CD8-positive, alpha-beta T cell (primary cell): ENCODE measurements at regions of chr3 and their contacts with region 1.

Region 1: DNA sequence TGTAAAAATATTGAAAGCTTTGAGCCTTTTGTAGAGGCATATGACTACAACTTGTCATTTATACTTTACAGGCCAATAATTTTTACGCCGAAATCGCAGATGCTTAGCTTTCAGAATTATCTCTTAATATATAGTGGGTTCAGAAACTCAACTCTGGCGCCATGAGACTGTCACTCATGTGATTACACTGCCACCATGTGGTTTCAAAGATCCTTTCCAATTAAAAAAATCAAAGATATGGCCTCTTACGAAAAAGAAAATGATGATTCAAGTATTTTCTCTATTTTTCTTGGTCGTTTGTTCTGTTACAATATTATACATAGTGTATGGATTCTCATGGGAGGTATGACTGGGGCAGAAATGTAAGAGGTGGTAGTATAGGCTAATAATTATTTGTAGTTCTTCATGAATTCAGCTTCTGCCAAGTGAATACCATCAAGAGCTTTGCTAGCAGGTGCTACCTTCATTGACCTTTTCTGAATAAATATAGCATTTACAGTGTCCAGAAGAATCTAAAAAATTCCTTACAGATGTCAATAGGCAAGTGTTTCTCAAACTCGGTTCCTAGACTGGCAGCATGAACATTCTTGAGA is 751.7 kb upstream of the GOLIM4 start:
- DNase-seq: peak in 1 of 9 experiments; percentile 14
- ATAC-seq: no peak
- H3K4me3 ChIP-seq: no peak overlapping the region
- H3K4me3 Mint-ChIP-seq: no peak overlapping the region
- H3K27ac ChIP-seq: no peak overlapping the region
- H3K27ac Mint-ChIP-seq: no peak overlapping the region
- H3K4me1 ChIP-seq: no peaks in the 10 kb centered on the region
- H3K4me1 Mint-ChIP-seq: no peaks in the 10 kb centered on the region
- H3K27me3 ChIP-seq: no peaks in the 10 kb centered on the region
- H3K27me3 Mint-ChIP-seq: no peaks in the 10 kb centered on the region
- CTCF ChIP-seq: no peak

Region 2: DNA sequence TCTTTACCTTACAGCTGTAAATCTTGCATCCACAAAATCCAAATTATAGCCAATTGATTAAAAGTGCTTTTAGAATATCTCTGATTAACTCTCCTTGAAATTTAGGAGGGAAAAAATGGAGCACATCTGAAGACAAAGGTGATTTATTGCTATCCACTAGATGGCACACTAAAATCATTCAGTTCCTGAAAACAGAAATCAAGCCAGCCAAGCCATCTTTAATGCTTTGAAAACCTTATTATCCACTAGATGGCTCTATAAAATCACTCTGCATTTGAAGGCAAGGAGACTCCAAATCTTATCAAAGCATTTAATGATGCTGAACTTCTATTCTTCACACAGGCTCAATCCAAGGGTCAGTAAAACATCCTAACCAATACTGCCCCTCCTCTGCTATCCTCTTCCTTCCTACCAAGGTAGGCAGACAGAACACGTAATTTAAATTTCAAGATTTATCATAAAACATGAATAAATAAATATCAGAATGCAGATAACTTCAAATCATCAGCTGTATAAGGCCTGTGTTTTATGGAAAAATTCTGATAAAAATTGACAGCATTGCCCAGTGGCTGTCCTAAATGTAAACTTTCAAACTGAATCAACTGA is 800.1 kb before region 1 on chr3:
- CTCF ChIA-PET with region 1: no interaction called
- POLR2A ChIA-PET with region 1: no interaction called
- intact Hi-C with region 1: loop called in 1 of 2 experiments (anchors 5 kb)
- DNase-seq: peak in 2 of 9 experiments; percentile 42 to 69
- ATAC-seq: peak; percentile 51
- H3K4me3 ChIP-seq: no peak overlapping the region
- H3K4me3 Mint-ChIP-seq: no peak overlapping the region
- H3K27ac ChIP-seq: no peak overlapping the region
- H3K27ac Mint-ChIP-seq: no peak overlapping the region
- H3K4me1 ChIP-seq: no peaks in the 10 kb centered on the region
- H3K4me1 Mint-ChIP-seq: no peaks in the 10 kb centered on the region
- H3K27me3 ChIP-seq: no peaks in the 10 kb centered on the region
- H3K27me3 Mint-ChIP-seq: no peaks in the 10 kb centered on the region
- CTCF ChIP-seq: peak; percentile 46

Region 3: DNA sequence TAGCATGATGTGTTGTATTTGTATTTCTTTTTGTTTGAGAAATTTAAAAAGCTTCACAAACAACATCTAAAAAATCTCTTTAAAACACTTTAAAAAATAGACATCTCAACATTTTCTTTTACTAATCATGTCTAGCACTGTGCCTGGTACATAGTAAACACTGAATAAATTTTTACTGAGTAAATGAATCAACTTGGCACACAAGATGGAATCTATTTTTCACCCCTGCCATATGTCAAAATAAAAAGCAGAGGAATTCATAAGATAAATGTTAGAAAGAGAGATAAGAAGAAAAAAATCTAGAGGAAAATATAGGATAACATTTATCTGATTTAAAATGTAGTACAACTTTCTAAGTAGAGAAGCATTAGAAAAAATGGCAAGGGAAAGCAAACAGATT is 743.0 kb before region 1 on chr3:
- CTCF ChIA-PET with region 1: no interaction called
- POLR2A ChIA-PET with region 1: no interaction called
- intact Hi-C with region 1: no loop called
- DNase-seq: no peak
- ATAC-seq: no peak
- H3K4me3 ChIP-seq: no peak overlapping the region
- H3K4me3 Mint-ChIP-seq: no peak overlapping the region
- H3K27ac ChIP-seq: no peak overlapping the region
- H3K27ac Mint-ChIP-seq: no peak overlapping the region
- H3K4me1 ChIP-seq: no peaks in the 10 kb centered on the region
- H3K4me1 Mint-ChIP-seq: no peaks in the 10 kb centered on the region
- H3K27me3 ChIP-seq: no peaks in the 10 kb centered on the region
- H3K27me3 Mint-ChIP-seq: peaks cover 6% of the 10 kb centered on the region
- CTCF ChIP-seq: no peak

Region 4: GRCh38 chr3:168213920-168214319 is 633.5 kb before region 1 on chr3:
- CTCF ChIA-PET with region 1: no interaction called
- POLR2A ChIA-PET with region 1: no interaction called
- intact Hi-C with region 1: loop called in 1 of 2 experiments (anchors 10 kb)
- DNase-seq: peak in 2 of 9 experiments; percentile 1 to 18
- ATAC-seq: peak; percentile 23
- H3K4me3 ChIP-seq: peak overlapping the region in 1 of 2 experiments; percentile 9
- H3K4me3 Mint-ChIP-seq: peak overlapping the region; percentile 36
- H3K27ac ChIP-seq: no peak overlapping the region
- H3K27ac Mint-ChIP-seq: no peak overlapping the region
- H3K4me1 ChIP-seq: no peaks in the 10 kb centered on the region
- H3K4me1 Mint-ChIP-seq: peaks cover 6% of the 10 kb centered on the region
- H3K27me3 ChIP-seq: no peaks in the 10 kb centered on the region
- H3K27me3 Mint-ChIP-seq: no peaks in the 10 kb centered on the region
- CTCF ChIP-seq: no peak